Transverse colon (tissue), 4 donors: ENCODE measurements at regions of chr2 and their contacts with region 1.

Region 1: DNA sequence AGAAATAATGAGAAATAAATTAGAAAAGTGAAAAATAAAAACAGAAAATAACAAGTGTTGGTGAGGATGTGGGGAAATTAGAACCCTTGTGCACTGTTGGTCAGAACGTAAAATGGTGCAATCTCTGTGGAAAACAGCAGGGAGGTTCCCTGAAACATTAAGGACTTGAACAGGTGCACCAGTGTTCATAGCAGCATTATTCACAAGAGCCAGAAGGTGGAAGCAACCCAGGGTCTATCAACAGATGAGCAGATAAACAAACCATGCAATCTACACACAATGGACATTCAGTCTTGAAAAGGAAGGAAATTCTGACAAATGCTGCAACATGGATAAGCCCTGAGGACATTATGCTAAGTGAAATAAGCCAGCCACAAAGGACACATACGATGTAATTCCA is 58.2 kb upstream of the TFCP2L1 start:
- DNase-seq: no peak
- H3K4me3 ChIP-seq: no peak overlapping the region
- H3K27ac ChIP-seq: peak overlapping the region in 1 of 4 donors; percentile 19
- H3K4me1 ChIP-seq: peaks cover 0 to 9% (median 2%) of the 10 kb centered on the region in 4 donors
- H3K27me3 ChIP-seq: no peaks in the 10 kb centered on the region
- CTCF ChIP-seq: no peak
- EP300 ChIP-seq: no peak
- POLR2A ChIP-seq: no peak

Region 2: DNA sequence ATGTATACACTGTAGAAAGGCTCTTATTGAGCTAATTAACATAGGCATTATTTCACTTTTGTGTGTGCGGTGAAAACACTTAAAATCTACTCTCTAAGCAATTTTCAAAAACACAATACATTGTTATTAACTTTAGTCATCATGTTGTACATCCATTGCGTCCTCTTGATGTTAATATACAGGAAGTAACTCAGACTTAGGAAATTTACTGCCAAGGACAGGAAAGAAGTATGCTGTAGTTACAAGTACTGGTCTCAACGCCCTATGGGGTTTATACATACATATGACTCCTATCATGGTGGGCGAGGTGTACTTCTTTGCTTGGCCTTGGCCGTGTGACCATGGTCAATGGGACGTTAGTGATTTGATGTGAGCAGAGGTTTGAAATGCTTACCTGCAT is 1834.4 kb before region 1 on chr2:
- in situ Hi-C with region 1: no loop called
- intact Hi-C with region 1: loop called (anchors 5 kb)
- DNase-seq: no peak
- H3K4me3 ChIP-seq: no peak overlapping the region
- H3K27ac ChIP-seq: no peak overlapping the region
- H3K4me1 ChIP-seq: no peaks in the 10 kb centered on the region
- H3K27me3 ChIP-seq: no peaks in the 10 kb centered on the region
- CTCF ChIP-seq: no peak
- EP300 ChIP-seq: no peak
- POLR2A ChIP-seq: no peak

Region 3: GRCh38 chr2:121128754-121129659 is 214.2 kb before region 1 on chr2:
- in situ Hi-C with region 1: no loop called
- intact Hi-C with region 1: loop called (anchors 5 kb)
- DNase-seq: peak; percentile 89
- H3K4me3 ChIP-seq: no peak overlapping the region
- H3K27ac ChIP-seq: peak overlapping the region in 2 of 4 donors; percentile 10 to 47
- H3K4me1 ChIP-seq: peaks cover 0 to 8% (median 3%) of the 10 kb centered on the region in 4 donors
- H3K27me3 ChIP-seq: no peaks in the 10 kb centered on the region
- CTCF ChIP-seq: peak; percentile 42 to 89 (median 63)
- EP300 ChIP-seq: peak; percentile 11
- POLR2A ChIP-seq: no peak